Aorta (tissue), 5 donors: ENCODE measurements at regions of chr5 and their contacts with region 1.

Region 1: GRCh38 chr5:43040287-43041098 is at the start of gene ANXA2R:
- DNase-seq: peak; percentile 89 to 92
- ATAC-seq: peak; percentile 82
- H3K4me3 ChIP-seq: peak within 1 kb of the TSS; percentile 36 to 46
- H3K27ac ChIP-seq: peak within 1 kb of the TSS; percentile 12 to 50
- H3K4me1 ChIP-seq: no peaks in the 10 kb centered on the region
- H3K27me3 ChIP-seq: no peaks in the 10 kb centered on the region
- total RNA-seq, gene ANXA2R: 2.7 to 6.4 TPM

Region 2: DNA sequence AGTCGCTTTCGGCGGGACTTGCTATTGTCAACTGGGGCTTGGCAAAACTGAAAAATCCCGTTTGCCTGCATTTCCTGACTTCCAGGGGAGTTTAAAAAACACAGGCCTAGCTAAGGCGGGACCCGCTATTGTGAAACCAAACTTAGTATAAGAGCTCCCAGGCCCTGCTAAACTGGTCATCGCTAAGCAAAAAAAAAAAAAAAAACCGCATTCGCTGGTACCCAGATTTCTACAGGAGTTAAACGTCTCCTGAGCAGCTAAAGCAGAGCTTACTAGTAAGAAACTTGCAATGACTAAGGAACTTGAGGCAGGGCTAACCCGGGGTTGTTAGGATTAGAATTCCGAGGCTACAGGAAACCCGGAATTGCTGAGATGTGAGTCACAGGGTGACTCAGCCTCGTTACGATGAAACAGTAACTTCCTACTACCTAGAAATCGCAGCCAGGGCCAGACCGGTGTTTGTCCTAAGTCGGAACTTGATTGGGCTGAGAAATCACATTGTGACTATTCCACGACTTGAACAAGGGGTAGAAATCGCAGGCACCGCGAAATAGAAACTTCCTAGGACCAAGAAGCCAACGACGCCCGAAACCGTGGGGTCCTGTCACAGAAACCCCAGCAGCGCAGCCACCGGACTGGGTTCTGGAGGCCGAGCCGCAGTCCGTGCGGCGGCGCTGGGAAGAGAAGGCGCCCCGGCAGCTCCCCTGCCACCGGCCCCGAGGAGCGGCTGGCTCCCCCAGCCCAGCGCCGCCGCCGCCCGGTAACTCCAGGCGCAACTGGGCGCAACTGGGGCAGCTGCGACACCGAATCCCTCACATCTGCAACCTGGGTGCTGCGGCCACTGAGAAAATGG is 89.8 kb before region 1 on chr5:
- intact Hi-C with region 1: loop called in 1 of 2 experiments (anchors 10 kb)
- DNase-seq: peak; percentile 88
- ATAC-seq: peak; percentile 86
- H3K4me3 ChIP-seq: peak overlapping the region; percentile 11 to 58
- H3K27ac ChIP-seq: peak overlapping the region in 1 of 2 donors; percentile 78
- H3K4me1 ChIP-seq: no peaks in the 10 kb centered on the region
- H3K27me3 ChIP-seq: no peaks in the 10 kb centered on the region

Region 3: DNA sequence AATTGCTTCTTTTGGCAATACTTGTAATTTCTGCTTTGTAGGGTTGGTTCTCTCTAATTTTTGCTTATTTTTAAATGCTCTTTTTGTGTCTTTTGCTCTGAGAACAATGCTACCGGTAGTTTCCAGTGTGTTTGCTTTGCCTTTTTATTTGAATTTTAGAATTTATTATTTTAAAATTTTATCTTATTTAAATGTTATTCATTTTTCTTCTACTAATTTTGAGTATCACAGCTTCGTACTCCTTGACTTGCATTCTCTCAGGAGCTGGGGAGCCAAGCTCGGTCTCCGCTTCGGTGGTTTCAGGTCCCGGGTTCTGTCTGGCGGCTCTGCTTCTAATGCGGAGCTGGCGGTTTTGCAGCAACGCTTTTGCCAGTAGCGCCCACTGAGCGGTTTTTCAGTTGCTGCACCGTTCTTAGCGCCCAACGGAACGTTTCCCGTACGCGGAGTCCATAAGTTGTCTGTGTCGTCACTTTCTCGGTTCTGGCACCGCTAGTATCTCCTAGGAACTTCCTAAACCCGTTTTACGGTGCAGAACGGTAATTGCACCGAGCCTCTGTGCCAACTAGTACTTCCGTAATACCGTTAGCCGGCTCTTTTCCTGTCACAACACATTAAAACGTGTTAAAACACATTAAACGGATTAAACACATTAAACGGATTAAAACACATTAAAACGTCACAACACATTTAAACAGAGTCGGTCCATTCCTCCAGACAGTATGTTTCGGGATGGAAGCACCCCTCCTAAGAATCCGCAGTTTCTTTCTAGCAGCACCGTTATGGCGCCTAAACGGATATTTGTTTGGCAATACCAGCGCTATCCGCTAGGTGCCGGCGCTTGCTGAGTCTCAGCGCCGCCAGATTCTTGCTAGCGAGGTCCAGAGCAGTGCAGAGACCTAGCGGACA is 46.0 kb before region 1 on chr5:
- intact Hi-C with region 1: loop called (anchors 2 kb)
- DNase-seq: peak; percentile 92
- ATAC-seq: peak; percentile 92
- H3K4me3 ChIP-seq: peak overlapping the region; percentile 1 to 56
- H3K27ac ChIP-seq: peak overlapping the region in 1 of 2 donors; percentile 61
- H3K4me1 ChIP-seq: peaks cover 0 to 3% of the 10 kb centered on the region in 2 donors
- H3K27me3 ChIP-seq: no peaks in the 10 kb centered on the region

Region 4: DNA sequence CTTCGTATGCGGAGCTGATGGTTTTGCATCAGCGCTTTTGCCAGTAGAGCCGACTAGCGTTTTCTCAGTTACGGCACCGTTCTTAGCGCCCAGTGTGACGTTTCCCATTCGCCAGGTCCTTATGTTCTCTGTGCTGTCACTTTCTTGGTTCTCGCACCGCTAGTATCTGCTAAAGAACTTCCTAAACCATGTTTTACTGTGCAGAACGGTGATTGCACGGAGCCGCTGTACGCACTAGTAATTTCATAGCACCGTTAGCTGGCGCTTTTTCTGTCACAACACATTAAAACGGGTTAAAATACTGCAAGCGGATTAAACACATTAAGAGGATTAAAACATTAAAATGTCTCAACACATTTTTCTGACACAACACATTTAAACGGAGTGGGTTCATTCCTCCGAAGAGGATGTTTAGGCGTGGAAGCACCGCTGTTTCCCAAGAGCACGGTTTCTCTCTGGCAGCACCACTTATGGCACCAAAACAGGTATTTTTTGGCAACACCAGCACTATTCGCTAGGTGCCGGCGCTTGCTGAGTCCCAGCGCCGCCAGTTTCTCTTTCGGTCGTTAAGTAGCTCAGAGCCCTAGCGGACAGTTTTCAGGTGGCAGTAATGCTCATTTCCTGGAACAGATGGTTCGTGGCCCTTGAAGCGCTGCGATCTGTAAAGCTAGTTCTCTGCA is 20.7 kb before region 1 on chr5:
- intact Hi-C with region 1: loop called in 1 of 2 experiments (anchors 2 kb)
- DNase-seq: peak in 1 of 2 donors; percentile 81
- ATAC-seq: peak; percentile 56
- H3K4me3 ChIP-seq: no peak overlapping the region
- H3K27ac ChIP-seq: no peak overlapping the region
- H3K4me1 ChIP-seq: no peaks in the 10 kb centered on the region
- H3K27me3 ChIP-seq: no peaks in the 10 kb centered on the region

Region 5: DNA sequence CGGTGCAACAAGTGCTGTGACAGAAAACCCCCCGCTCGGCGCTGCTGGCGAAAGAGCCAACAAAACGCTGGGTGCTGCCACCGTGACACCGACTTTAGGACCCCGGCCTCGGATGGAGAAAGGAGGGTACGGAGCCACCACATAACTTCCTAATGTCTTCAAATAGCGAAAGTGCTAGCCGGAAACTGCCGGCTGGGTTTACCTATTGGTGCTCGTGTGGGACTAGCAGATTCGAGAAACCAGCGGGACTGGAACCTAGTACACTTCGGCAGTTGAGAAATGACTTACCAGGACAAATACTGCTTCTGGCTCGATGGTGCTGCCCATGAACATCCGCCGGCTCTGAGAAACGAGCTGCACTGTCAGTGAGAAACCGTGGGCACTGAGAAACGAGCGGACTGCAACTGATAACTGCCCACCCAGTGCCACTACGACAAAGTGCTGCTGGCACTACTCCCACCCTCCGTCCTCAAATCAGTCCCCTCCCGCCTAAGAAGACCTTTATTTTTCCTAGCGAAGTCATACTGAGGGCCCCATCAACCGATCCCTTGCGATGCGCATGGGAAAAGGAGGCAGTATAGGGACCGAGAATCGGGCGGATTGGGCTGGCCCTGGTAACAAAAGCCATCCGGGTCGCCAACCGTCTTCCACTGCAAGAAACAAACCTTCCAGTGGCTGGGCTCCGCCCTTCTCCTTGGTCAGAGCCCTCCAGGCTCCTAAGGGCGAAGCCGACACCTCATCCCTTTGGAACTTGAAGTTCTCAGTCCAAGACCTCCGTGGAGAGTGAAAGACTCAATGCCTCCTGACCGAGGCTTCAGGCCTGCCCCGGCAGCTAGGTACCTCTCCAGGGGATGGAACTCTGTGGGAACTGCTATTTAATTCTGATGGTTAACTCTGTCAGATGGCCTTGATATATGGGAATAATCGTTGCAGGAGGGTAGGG is 26.6 kb after region 1 on chr5:
- intact Hi-C with region 1: loop called (anchors 2 kb)
- DNase-seq: peak; percentile 93
- ATAC-seq: peak; percentile 89
- H3K4me3 ChIP-seq: peak overlapping the region; percentile 57 to 71
- H3K27ac ChIP-seq: peak overlapping the region; percentile 84 to 94
- H3K4me1 ChIP-seq: no peaks in the 10 kb centered on the region
- H3K27me3 ChIP-seq: no peaks in the 10 kb centered on the region

Region 6: DNA sequence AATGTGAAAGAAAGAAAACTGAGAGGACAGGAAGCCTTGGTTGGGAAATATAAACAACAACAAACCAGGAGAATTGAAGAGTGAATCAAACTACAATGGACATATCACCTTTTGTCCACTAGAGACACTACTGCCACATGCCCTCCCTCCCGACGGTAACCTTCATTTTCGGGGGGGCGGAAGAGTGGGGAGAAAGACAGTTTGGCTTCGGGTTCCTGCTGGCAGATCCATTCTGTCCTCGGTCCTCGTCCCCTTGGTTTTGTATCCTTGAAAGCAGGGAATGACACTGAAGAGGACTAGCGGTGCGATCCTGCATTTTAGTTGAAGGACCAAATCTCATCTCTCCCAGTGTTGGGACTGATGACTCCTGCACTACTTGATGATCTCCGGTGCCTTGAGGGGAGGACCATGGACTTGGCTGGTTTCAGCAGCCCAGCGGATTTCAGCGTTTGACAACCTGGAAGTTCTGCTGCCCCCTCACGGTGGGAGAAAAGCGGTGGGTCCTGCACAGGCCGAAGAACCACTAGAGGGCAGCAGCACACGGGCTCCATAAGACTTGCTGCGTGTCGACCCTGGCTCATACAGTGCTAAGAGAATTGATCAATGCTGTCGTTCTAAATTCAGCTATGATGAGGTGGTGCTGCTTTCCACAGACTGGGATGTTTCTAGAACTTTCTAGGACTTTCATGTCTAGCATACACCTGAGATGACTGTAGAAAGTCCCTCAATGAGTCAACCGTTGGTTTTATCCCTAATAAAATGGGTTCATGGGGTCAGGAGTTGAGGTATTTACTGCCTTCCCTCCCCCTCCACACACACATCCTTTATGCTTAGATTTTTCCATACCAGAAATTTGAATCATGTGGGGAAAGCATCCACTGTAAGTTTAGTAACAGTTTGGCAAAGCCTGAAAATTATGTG is 65.1 kb after region 1 on chr5:
- intact Hi-C with region 1: loop called in 1 of 2 experiments (anchors 2 kb)
- DNase-seq: peak; percentile 93 to 96
- ATAC-seq: peak; percentile 98
- H3K4me3 ChIP-seq: peak overlapping the region in 1 of 2 donors; percentile 25
- H3K27ac ChIP-seq: no peak overlapping the region
- H3K4me1 ChIP-seq: no peaks in the 10 kb centered on the region
- H3K27me3 ChIP-seq: no peaks in the 10 kb centered on the region